CD14-positive monocyte (primary cell): ENCODE measurements at regions of chr19 and their contacts with region 1.

Region 1: GRCh38 chr19:19776041-19777008 is 43.4 kb upstream of the ZNF14 start:
- DNase-seq: peak; percentile 90 to 95 (median 94)
- H3K4me3 ChIP-seq: peak overlapping the region; percentile 55 to 82 (median 63)
- H3K4me3 Mint-ChIP-seq: peak overlapping the region; percentile 91 to 94
- H3K27ac ChIP-seq: peak overlapping the region in 1 of 2 donors; percentile 73
- H3K27ac Mint-ChIP-seq: peak overlapping the region; percentile 72 to 90 (median 82)
- H3K4me1 ChIP-seq: peaks cover 12 to 16% of the 10 kb centered on the region in 2 donors
- H3K4me1 Mint-ChIP-seq: peaks cover 18% of the 10 kb centered on the region
- H3K27me3 ChIP-seq: no peaks in the 10 kb centered on the region
- H3K27me3 Mint-ChIP-seq: no peaks in the 10 kb centered on the region
- CTCF ChIP-seq: no peak

Region 2: DNA sequence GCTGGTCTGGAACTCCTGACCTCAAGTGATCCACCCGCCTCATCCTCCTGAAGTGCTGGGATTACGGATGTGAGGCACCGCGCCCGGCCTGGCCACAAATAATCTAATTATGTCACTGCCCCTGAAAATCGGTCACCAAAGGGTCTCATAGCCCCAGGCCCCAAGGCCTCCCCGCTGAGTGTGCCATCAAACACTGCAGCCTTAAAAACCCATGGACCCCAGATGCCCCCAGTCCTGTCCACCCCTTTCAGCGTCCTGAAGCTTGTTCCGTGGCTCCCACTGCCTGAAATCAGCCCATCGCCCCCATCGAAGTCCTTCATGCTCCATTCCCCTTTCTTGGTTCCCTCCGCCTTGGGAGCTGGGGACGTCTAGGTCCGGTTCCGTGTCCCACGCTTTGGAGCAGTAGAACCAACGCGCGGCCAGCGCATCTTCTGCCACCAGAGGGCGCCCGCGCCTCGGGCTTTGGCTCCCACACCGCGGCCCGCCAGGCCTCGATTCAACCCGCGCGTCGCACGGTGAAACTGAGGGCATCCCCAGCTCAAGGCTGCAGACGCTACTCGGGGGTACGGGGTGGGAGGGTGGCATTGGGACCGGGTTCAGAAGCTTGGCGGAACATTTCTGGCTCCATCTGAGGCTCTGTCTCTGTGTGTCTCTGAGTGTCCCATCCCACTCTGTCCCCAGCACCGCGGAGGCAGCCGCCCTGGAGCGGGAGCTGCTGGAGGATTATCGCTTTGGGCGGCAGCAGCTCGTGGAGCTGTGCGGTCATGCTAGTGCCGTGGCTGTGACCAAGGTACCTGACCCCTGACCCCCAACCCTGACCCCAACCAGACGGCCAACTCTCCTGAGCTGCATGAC is 244.1 kb before region 1 on chr19:
- intact Hi-C with region 1: loop called in 1 of 2 experiments (anchors 10 kb)
- DNase-seq: peak; percentile 68 to 79 (median 75)
- H3K4me3 ChIP-seq: no peak overlapping the region
- H3K4me3 Mint-ChIP-seq: no peak overlapping the region
- H3K27ac ChIP-seq: no peak overlapping the region
- H3K27ac Mint-ChIP-seq: no peak overlapping the region
- H3K4me1 ChIP-seq: peaks cover 0 to 3% of the 10 kb centered on the region in 2 donors
- H3K4me1 Mint-ChIP-seq: peaks cover 6% of the 10 kb centered on the region
- H3K27me3 ChIP-seq: peaks cover 0 to 6% of the 10 kb centered on the region in 2 donors
- H3K27me3 Mint-ChIP-seq: peaks cover 4 to 17% (median 12%) of the 10 kb centered on the region in 3 donors
- CTCF ChIP-seq: peak; percentile 91

Region 3: GRCh38 chr19:19663256-19664038 is 112.9 kb before region 1 on chr19 and contains the start of gene ATP13A1:
- intact Hi-C with region 1: loop called in 1 of 2 experiments (anchors 5 kb)
- DNase-seq: peak; percentile 96 to 99 (median 97)
- H3K4me3 ChIP-seq: peak within 1 kb of the TSS; percentile 80 to 95 (median 93)
- H3K4me3 Mint-ChIP-seq: peak within 1 kb of the TSS; percentile 90 to 94
- H3K27ac ChIP-seq: peak within 1 kb of the TSS; percentile 96 to 99
- H3K27ac Mint-ChIP-seq: peak within 1 kb of the TSS; percentile 95 to 99 (median 98)
- H3K4me1 ChIP-seq: peaks cover 28 to 41% of the 10 kb centered on the region in 2 donors
- H3K4me1 Mint-ChIP-seq: peaks cover 32% of the 10 kb centered on the region
- H3K27me3 ChIP-seq: no peaks in the 10 kb centered on the region
- H3K27me3 Mint-ChIP-seq: peaks cover 0 to 4% (median 2%) of the 10 kb centered on the region in 3 donors
- CTCF ChIP-seq: peak; percentile 14
- polyA plus RNA-seq, gene ATP13A1: 16.9 to 106 (median 21.9) TPM

Region 4: DNA sequence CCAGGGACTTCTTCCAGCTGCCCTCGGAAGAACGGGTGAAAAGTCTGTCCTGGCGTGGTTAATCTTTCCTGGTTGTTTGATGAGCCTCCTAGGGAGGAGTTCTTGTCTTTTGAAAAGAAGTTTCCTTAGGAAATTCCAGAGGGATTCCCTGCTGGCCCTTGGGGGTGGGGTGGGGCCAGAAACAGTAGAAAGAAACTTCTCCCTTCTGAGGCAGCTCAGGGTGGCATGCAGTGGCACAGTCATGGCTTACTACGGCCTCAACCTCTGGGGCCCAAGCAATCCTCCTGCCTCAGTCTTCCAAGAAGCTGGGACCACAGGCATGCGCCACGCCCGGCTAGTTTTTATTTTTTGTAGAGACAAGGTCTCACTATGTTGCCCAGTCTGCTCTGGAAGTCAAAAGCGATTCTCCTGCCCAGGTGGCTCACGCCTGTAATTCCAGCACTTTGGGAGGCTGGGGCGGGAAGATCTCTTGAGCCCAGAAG is 106.2 kb before region 1 on chr19:
- intact Hi-C with region 1: loop called (anchors 5 kb)
- DNase-seq: no peak
- H3K4me3 ChIP-seq: peak overlapping the region in 1 of 3 experiments; percentile 97
- H3K4me3 Mint-ChIP-seq: peak overlapping the region in 1 of 2 donors; percentile 94
- H3K27ac ChIP-seq: no peak overlapping the region
- H3K27ac Mint-ChIP-seq: peak overlapping the region in 1 of 7 donors; percentile 40
- H3K4me1 ChIP-seq: peaks cover 13 to 22% of the 10 kb centered on the region in 2 donors
- H3K4me1 Mint-ChIP-seq: peaks cover 19% of the 10 kb centered on the region
- H3K27me3 ChIP-seq: no peaks in the 10 kb centered on the region
- H3K27me3 Mint-ChIP-seq: peaks cover 0 to 2% (median 0%) of the 10 kb centered on the region in 3 donors
- CTCF ChIP-seq: no peak

Region 5: GRCh38 chr19:19732579-19733501 is 43.5 kb before region 1 on chr19 and contains the start of gene ZNF14:
- intact Hi-C with region 1: loop called (anchors 1 to 5 kb)
- DNase-seq: peak; percentile 81 to 87 (median 82)
- H3K4me3 ChIP-seq: peak within 1 kb of the TSS; percentile 63 to 78 (median 77)
- H3K4me3 Mint-ChIP-seq: peak within 1 kb of the TSS; percentile 96 to 97
- H3K27ac ChIP-seq: peak within 1 kb of the TSS in 1 of 2 donors; percentile 65
- H3K27ac Mint-ChIP-seq: peak within 1 kb of the TSS; percentile 70 to 96 (median 82)
- H3K4me1 ChIP-seq: peaks cover 7 to 19% of the 10 kb centered on the region in 2 donors
- H3K4me1 Mint-ChIP-seq: peaks cover 18% of the 10 kb centered on the region
- H3K27me3 ChIP-seq: no peaks in the 10 kb centered on the region
- H3K27me3 Mint-ChIP-seq: peaks cover 0 to 9% (median 7%) of the 10 kb centered on the region in 3 donors
- CTCF ChIP-seq: peak; percentile 21
- polyA plus RNA-seq, gene ZNF14: 0.88 to 2.1 (median 1.2) TPM

Region 6: DNA sequence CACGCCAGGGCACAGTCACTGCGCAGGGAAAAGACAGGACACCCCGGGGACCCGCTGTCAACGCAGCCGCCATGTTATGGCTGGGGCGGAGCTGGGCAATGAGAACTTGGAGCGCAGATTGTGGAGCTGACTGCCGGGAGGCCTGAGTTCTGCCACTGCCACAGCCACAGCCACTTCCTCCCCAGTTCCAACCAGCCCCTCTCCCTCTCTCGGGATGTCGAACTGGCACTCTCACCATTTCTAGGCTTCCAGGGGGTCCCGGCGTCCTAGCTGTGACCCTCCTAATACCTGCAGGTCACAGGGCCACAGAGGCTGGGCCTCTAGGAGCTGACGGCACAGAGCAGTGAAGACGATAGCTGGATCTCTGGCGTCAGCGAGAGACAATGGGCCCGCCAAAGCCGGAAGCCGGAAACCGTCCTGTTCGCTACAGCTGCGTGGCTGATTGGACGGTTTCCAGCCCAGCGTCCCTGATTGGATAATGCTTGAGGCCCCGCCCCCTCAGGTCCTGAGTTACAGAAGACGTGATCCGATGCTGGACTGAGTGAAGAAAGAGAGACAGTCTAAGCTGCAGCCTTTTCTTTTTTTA is 45.1 kb after region 1 on chr19 and contains the start of gene ZNF506:
- intact Hi-C with region 1: loop called (anchors 2 to 5 kb)
- DNase-seq: peak; percentile 90 to 93 (median 91)
- H3K4me3 ChIP-seq: peak within 1 kb of the TSS; percentile 61 to 87 (median 71)
- H3K4me3 Mint-ChIP-seq: peak within 1 kb of the TSS; percentile 99
- H3K27ac ChIP-seq: peak within 1 kb of the TSS; percentile 86 to 92
- H3K27ac Mint-ChIP-seq: peak within 1 kb of the TSS; percentile 95 to 99 (median 98)
- H3K4me1 ChIP-seq: peaks cover 0 to 8% of the 10 kb centered on the region in 2 donors
- H3K4me1 Mint-ChIP-seq: peaks cover 9% of the 10 kb centered on the region
- H3K27me3 ChIP-seq: no peaks in the 10 kb centered on the region
- H3K27me3 Mint-ChIP-seq: peaks cover 0 to 1% (median 0%) of the 10 kb centered on the region in 3 donors
- CTCF ChIP-seq: no peak
- polyA plus RNA-seq, gene ZNF506: 4.1 to 8.3 (median 6.1) TPM

Region 7: GRCh38 chr19:19900729-19901444 is 124.6 kb after region 1 on chr19 and contains the start of gene ZNF93:
- intact Hi-C with region 1: loop called in 1 of 2 experiments (anchors 2 kb)
- DNase-seq: peak; percentile 85 to 87 (median 86)
- H3K4me3 ChIP-seq: peak within 1 kb of the TSS; percentile 68 to 94 (median 88)
- H3K4me3 Mint-ChIP-seq: peak within 1 kb of the TSS; percentile 98 to 99
- H3K27ac ChIP-seq: peak within 1 kb of the TSS; percentile 82 to 86
- H3K27ac Mint-ChIP-seq: peak within 1 kb of the TSS; percentile 80 to 93 (median 90)
- H3K4me1 ChIP-seq: peaks cover 12 to 18% of the 10 kb centered on the region in 2 donors
- H3K4me1 Mint-ChIP-seq: peaks cover 12% of the 10 kb centered on the region
- H3K27me3 ChIP-seq: no peaks in the 10 kb centered on the region
- H3K27me3 Mint-ChIP-seq: peaks cover 0 to 2% (median 0%) of the 10 kb centered on the region in 3 donors
- CTCF ChIP-seq: no peak
- polyA plus RNA-seq, gene ZNF93: 2.4 to 4.6 (median 2.8) TPM